MCF 10A (cell line): ENCODE measurements at regions of chr17 and their contacts with region 1.

Region 1: DNA sequence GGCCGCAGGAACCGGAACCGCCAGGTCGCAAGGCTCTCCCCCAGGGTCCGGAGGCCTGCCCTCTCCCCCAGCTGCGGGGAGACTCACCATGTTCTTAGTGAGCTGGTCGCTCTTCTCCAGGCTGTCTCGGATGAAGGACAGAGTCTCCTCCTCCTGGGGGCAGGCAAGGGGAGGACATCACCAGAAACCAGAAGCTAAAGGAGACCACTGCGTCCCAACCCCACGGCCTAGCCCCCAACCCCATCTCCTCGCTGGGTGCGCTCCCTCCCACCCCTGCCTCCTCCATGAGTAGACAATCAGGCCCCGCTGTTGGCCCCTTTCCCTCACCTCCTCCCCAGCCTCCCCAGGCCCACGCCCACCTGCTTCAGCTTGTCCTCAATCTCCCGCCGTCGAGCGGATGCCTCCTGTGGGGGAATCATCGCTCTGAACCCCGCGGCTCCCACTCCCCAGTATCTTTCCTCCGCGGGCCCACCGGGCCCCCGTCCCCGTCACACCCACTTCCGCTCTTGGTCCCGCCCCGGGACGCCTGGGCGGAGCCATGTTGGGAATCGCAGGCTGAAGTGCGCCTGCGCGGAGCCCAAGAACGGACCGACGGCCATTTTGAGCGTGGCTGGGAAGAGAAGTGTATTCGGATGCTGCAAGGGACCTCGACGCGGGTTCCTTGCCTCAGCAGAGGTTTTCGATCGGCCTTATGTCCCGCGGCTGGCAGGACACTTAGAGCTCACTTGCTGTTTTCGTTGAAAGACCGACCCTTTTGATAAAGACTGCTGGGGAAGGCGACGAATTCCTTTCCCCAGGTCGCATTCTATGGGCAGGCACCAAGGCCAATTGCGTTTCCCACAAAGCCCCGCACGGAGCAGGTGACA is at the start of gene EXOC7:
- DNase-seq: peak; percentile 93
- H3K4me3 Mint-ChIP-seq: peak within 1 kb of the TSS; percentile 95
- H3K27ac Mint-ChIP-seq: peak within 1 kb of the TSS; percentile 98
- H3K4me1 Mint-ChIP-seq: peaks cover 5% of the 10 kb centered on the region
- H3K27me3 Mint-ChIP-seq: no peaks in the 10 kb centered on the region
- CTCF ChIP-seq: peak; percentile 13
- total RNA-seq, gene EXOC7: 80.8 and 106 TPM in 2 replicates

Region 2: DNA sequence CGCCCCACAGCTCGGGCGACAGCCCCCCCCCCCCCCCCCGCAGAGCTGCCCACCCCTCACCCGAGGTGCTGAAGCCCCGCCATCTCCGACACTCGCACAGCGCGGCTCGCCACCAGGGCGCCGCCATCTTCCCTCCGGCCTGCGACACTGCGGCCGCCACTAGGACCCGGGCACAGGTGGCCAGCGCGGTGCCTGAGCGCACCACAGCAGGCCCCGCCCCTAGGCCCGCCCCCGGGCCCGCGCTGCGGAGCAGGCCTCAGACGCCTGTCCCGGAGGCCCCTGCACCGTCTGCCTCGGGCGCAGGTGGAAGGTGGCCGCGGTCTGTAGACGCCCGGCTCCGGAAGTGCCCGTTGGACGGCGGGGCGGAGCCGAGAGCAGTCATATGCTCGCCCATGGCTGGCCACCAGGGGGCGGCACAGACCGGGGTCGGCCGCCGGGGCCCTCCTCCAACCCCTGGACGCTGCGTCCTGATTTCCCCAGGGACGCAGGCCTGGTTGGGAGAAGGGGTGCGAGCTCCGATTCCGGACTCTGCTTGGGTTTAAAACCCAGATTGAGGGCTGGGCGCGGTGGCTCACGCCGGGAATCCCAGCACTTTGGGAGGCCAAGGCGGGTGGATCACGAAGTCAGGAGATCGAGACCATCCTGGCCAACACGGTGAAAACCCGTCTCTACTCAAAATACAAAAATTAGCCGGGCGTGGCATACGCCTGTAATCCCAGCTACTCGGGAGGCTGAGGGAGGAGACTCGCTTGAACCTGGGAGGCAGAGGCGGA is 198.6 kb before region 1 on chr17 and contains the start of gene MRPL38:
- CTCF ChIA-PET with region 1: no interaction called
- POLR2A ChIA-PET with region 1: interaction called, 3 read pairs
- intact Hi-C with region 1: loop called (anchors 1 kb)
- DNase-seq: peak; percentile 93
- H3K4me3 Mint-ChIP-seq: peak within 1 kb of the TSS; percentile 91
- H3K27ac Mint-ChIP-seq: peak within 1 kb of the TSS; percentile 92
- H3K4me1 Mint-ChIP-seq: peaks cover 16% of the 10 kb centered on the region
- H3K27me3 Mint-ChIP-seq: no peaks in the 10 kb centered on the region
- CTCF ChIP-seq: peak; percentile 96
- total RNA-seq, gene MRPL38: 97.9 and 111 TPM in 2 replicates

Region 3: GRCh38 chr17:76079956-76080767 is 23.3 kb before region 1 on chr17:
- CTCF ChIA-PET with region 1: no interaction called
- POLR2A ChIA-PET with region 1: interaction called, 12 read pairs
- intact Hi-C with region 1: no loop called
- DNase-seq: no peak
- H3K4me3 Mint-ChIP-seq: no peak overlapping the region
- H3K27ac Mint-ChIP-seq: no peak overlapping the region
- H3K4me1 Mint-ChIP-seq: peaks cover under 1% of the 10 kb centered on the region
- H3K27me3 Mint-ChIP-seq: peaks cover 45% of the 10 kb centered on the region
- CTCF ChIP-seq: no peak